Calu3 (cell line): ENCODE measurements at regions of chr2 and their contacts with region 1.

Region 1: GRCh38 chr2:191231995-191232394 is 13.2 kb upstream of the MYO1B start:
- DNase-seq: no peak
- H3K4me3 Mint-ChIP-seq: no peak overlapping the region
- H3K27ac Mint-ChIP-seq: no peak overlapping the region
- H3K4me1 Mint-ChIP-seq: peaks cover 15% of the 10 kb centered on the region
- H3K27me3 Mint-ChIP-seq: no peaks in the 10 kb centered on the region
- CTCF ChIP-seq: peak; percentile 41

Region 2: GRCh38 chr2:191280304-191280703 is 48.3 kb after region 1 on chr2:
- CTCF ChIA-PET with region 1: no interaction called
- intact Hi-C with region 1: no loop called
- DNase-seq: no peak
- H3K4me3 Mint-ChIP-seq: no peak overlapping the region
- H3K27ac Mint-ChIP-seq: no peak overlapping the region
- H3K4me1 Mint-ChIP-seq: no peaks in the 10 kb centered on the region
- H3K27me3 Mint-ChIP-seq: no peaks in the 10 kb centered on the region
- CTCF ChIP-seq: no peak

Region 3: DNA sequence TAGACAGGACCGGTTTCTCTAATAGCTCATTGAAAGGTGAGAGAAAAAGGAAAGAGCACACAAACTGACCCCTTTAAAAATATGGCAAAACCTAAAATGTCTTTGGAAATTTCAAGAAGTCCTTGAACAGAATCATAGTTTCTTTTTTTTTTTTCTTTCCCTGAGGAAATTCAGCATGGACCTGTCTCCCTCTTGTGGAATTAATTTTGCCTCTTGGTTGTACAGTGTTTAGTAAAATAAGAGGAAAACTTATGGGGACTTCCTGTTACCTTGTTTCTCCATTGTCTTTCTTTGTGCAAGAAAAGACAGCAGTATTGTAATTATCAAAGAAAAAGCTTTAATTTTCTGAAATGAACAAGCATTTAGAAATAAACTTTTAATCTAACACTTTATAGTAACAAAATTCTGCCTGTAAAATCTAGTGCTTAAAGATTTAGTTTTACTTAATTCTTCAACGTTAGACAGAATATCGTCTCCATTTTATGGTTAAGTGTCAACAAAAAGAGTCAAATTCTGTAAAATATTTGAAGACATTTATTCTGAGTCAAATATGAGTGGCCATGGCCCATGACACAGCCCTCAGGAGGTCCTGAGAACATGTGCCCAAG is 269.7 kb after region 1 on chr2:
- CTCF ChIA-PET with region 1: no interaction called
- intact Hi-C with region 1: loop called (anchors 5 kb)
- DNase-seq: no peak
- H3K4me3 Mint-ChIP-seq: no peak overlapping the region
- H3K27ac Mint-ChIP-seq: no peak overlapping the region
- H3K4me1 Mint-ChIP-seq: peaks cover 2% of the 10 kb centered on the region
- H3K27me3 Mint-ChIP-seq: no peaks in the 10 kb centered on the region
- CTCF ChIP-seq: peak; percentile 41

Region 4: DNA sequence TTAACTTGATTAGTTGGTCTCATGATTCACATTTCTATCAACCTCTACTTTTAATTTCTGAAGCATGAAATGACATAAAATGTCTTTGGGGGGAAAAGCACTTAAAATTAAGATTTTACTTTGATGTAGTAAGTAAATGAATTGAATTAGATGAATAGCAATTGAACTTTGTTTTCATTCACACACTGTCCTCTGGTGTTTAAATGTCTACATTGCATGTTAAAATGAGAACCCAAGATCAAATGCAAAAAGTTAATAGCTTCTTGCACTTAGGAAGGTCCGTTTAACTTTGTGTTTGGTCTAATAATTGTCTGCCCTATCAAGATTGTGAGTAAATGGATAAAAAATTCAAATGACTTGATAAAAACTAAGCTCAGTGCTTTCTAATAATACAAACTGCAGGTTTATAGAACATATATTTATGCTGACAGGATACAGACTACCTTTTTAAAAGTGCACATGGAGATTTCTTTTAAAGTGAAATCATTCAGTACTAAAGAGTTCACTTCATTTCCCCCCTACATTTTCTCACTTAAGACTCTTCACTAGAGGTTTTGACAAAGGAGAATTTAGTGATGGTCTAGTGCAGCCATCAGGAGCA is 289.7 kb after region 1 on chr2:
- CTCF ChIA-PET with region 1: no interaction called
- intact Hi-C with region 1: loop called (anchors 2 kb)
- DNase-seq: no peak
- H3K4me3 Mint-ChIP-seq: no peak overlapping the region
- H3K27ac Mint-ChIP-seq: no peak overlapping the region
- H3K4me1 Mint-ChIP-seq: no peaks in the 10 kb centered on the region
- H3K27me3 Mint-ChIP-seq: no peaks in the 10 kb centered on the region
- CTCF ChIP-seq: peak; percentile 78